Activated CD4-positive, alpha-beta T cell treated with anti-CD3 and anti-CD28 coated beads for 36 hours (primary cell): ENCODE measurements at regions of chr17 and their contacts with region 1.

Region 1: GRCh38 chr17:30848021-30848420 is 16.3 kb downstream of the ATAD5 start:
- DNase-seq: no peak
- ATAC-seq: no peak
- H3K4me3 Mint-ChIP-seq: no peak overlapping the region
- H3K27ac Mint-ChIP-seq: no peak overlapping the region
- H3K4me1 Mint-ChIP-seq: no peaks in the 10 kb centered on the region
- H3K27me3 Mint-ChIP-seq: no peaks in the 10 kb centered on the region

Region 2: GRCh38 chr17:30886187-30886586 is 38.2 kb after region 1 on chr17:
- CTCF ChIA-PET with region 1: no interaction called
- POLR2A ChIA-PET with region 1: no interaction called
- intact Hi-C with region 1: loop called in 1 of 2 experiments (anchors 5 kb)
- DNase-seq: no peak
- ATAC-seq: no peak
- H3K4me3 Mint-ChIP-seq: no peak overlapping the region
- H3K27ac Mint-ChIP-seq: no peak overlapping the region
- H3K4me1 Mint-ChIP-seq: no peaks in the 10 kb centered on the region
- H3K27me3 Mint-ChIP-seq: no peaks in the 10 kb centered on the region

Region 3: DNA sequence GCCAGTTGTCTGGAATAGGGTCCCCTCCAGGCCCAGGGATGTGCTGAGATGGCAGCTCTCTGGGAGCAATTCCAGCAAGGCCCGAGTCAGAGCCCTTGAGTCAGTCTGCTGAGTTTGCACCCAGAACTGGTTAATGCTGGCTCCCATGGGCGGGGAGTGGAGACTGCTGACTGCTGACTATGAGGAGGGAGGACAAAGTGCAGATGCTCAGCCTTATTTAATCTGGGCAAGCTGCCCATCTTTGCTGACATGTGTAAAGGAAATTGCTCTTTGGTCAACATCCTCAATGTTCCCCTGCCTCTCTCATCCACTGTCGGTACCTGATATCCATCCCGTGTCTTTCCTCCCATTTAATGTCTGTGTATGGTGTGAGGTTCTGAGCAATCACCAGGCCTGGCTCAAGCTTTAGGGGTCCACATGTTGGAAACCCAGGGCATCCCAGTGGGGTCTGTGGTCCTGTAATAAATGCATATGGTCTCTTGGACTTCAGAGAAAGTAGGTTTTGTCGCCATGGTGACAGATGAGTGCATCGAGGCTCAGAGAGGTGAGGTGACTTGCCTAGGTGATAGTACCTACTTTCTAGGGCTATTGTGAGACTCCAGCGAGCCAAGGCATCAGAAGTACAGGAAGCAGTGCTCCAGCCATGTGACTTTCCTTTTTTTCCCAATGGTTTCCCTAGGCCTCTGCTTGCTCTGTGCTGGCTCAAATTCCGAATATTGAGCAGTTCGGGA is 102.8 kb after region 1 on chr17:
- CTCF ChIA-PET with region 1: no interaction called
- POLR2A ChIA-PET with region 1: no interaction called
- intact Hi-C with region 1: no loop called
- DNase-seq: no peak
- ATAC-seq: no peak
- H3K4me3 Mint-ChIP-seq: no peak overlapping the region
- H3K27ac Mint-ChIP-seq: no peak overlapping the region
- H3K4me1 Mint-ChIP-seq: no peaks in the 10 kb centered on the region
- H3K27me3 Mint-ChIP-seq: no peaks in the 10 kb centered on the region

Region 4: GRCh38 chr17:31074772-31075555 is 226.9 kb after region 1 on chr17:
- CTCF ChIA-PET with region 1: no interaction called
- POLR2A ChIA-PET with region 1: no interaction called
- intact Hi-C with region 1: no loop called
- DNase-seq: no peak
- ATAC-seq: no peak
- H3K4me3 Mint-ChIP-seq: no peak overlapping the region
- H3K27ac Mint-ChIP-seq: no peak overlapping the region
- H3K4me1 Mint-ChIP-seq: no peaks in the 10 kb centered on the region
- H3K27me3 Mint-ChIP-seq: no peaks in the 10 kb centered on the region